ENCODE measurements at regions of chr2 and their contacts with region 1.

Region 1: DNA sequence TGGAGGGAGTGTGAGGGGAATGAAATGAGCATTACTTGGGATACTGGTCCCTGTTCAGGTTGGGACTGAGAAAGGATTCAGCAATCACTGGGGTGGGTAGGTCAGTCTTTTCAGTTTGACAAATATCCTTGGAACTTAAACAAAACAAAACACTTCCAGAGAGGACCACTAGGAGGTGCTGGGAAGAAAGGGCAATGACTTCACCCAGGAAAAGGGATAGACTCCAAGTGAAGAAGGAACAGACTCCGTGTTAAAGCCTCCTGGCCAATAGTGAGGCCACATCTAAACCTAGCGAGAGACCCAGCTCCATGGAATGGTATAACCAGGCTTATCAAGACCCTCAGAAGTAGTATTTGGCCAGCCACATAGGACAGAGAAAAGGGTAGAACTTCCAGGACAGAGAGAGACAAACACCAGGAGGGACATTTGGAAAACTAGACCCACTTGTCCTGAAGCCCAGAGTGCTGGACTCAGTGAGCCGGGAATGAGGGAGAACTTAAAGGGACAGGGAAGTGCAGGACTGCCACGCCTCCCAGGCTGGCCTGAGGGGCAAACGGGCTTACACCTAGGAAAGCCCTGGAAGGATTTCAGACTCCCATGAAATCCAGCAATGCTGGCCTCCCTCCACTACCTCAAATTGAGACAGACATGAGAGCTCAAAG is 19.6 kb upstream of the KCNG3 start:
- DNase-seq: no peak
- H3K4me3 ChIP-seq: no peak overlapping the region
- H3K27ac ChIP-seq: no peak overlapping the region
- H3K4me1 ChIP-seq: no peaks in the 10 kb centered on the region
- H3K27me3 ChIP-seq: no peaks in the 10 kb centered on the region
- CTCF ChIP-seq: peak in 5 of 6 experiments; percentile 54 to 73 (median 59)
- POLR2A ChIP-seq: no peak

Region 2: DNA sequence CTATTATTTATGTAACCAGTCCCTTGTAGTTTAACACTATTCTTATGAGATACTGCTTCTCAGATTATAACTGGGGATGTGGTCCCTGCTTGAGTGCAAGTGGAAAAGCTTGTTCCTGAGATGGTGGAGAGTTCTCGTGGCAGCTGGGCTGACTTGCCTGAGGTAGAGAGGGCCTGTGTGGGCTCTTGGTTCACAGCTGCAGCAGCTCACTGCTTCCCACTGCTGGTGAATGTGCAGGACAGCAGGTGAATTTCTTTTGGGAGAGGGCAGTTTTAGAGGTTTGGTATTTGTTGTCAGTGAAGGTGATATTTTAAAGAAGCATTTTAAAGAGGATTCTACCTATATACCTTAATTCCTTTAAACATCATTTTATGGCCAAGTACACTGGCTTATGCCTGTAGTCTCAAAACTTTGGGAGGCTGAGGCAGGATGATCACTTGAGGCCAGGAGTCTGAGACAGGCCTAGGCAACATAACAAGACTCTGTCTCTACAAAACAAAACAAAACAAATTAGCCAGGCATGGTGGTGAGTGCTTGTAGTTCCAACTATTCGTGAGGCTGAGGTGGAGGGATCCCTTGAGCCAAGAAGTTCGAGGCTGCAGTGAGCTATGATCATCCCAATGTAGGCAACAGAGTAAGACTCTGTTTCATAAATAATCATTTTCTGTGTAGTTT is 149.9 kb after region 1 on chr2:
- intact Hi-C with region 1: loop called (anchors 5 kb)
- DNase-seq: peak; percentile 11
- H3K4me3 ChIP-seq: no peak overlapping the region
- H3K27ac ChIP-seq: no peak overlapping the region
- H3K4me1 ChIP-seq: no peaks in the 10 kb centered on the region
- H3K27me3 ChIP-seq: no peaks in the 10 kb centered on the region
- CTCF ChIP-seq: peak; percentile 90 to 95 (median 93)
- POLR2A ChIP-seq: no peak

Region 3: GRCh38 chr2:42764096-42764495 is 250.7 kb after region 1 on chr2 and contains the start of gene OXER1:
- intact Hi-C with region 1: no loop called
- DNase-seq: no peak
- H3K4me3 ChIP-seq: no peak within 1 kb of the TSS
- H3K27ac ChIP-seq: no peak within 1 kb of the TSS
- H3K4me1 ChIP-seq: no peaks in the 10 kb centered on the region
- H3K27me3 ChIP-seq: no peaks in the 10 kb centered on the region
- CTCF ChIP-seq: no peak
- POLR2A ChIP-seq: no peak
- total RNA-seq, gene OXER1: 0.18 to 2.3 (median 1.1) TPM